ENCODE measurements at regions of chr15 and their contacts with region 1.

Region 1: DNA sequence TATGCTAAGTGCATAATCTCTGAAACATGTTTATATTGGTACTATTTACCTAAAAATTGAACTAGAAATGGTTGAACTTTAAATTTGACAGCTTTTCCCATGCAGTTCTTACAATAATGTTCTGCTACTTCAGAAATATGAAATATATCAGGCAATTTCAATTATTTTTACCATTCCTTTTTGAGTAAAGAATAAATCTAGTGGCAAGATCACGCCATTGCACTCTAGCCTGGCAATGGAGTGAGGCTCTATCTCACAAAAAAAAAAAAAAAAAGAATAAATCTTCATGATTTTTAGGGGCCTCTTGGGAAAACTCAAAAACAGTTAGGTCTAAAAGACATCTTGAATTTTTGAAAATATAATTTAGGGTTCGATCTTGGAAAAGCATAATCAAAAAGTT is 10.6 kb upstream of the DNAAF4 start:
- ATAC-seq: no peak
- H3K4me3 ChIP-seq: no peak overlapping the region
- H3K27ac ChIP-seq: no peak overlapping the region
- H3K4me1 ChIP-seq: no peaks in the 10 kb centered on the region

Region 2: DNA sequence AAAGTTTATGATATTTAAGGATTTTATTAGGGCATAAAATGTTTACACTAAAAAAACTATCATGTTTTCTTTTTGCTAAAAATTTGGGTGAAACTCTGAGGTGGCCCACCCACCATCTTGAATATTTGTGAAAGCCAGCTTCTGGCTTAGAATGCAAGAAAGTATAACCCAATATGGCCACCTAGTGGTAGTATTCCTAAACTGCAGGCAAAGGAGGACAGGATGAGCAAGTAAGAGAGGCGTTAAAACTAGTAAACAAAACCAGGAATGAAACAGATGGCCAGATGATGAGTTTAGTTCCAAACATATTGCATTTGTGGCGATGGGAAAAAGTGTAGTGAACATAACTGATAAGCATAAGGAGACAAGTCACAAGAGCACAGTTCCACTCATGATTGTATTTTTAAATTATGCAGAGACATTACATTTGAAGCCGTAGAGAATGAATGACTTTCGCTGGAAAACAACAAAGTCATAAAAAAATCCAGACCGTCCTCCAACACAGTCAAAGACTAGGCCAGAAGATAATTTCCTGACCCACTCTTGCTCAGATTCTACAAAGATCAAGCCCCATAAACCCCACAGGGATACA is 327.6 kb after region 1 on chr15:
- in situ Hi-C with region 1: loop called in 1 of 9 experiments (anchors 25 kb)
- ATAC-seq: peak; percentile 41 to 86 (median 58)
- H3K4me3 ChIP-seq: no peak overlapping the region
- H3K27ac ChIP-seq: no peak overlapping the region
- H3K4me1 ChIP-seq: no peaks in the 10 kb centered on the region

Measured in motor neuron (in vitro differentiated cells).